IMR-90 (cell line): ENCODE measurements at regions of chr5 and their contacts with region 1.

Region 1: GRCh38 chr5:41445932-41446563 is 64.4 kb downstream of the PLCXD3 start:
- DNase-seq: peak; percentile 40
- ATAC-seq: no peak
- H3K4me3 ChIP-seq: no peak overlapping the region
- H3K27ac ChIP-seq: no peak overlapping the region
- H3K4me1 ChIP-seq: no peaks in the 10 kb centered on the region
- H3K27me3 ChIP-seq: peaks cover 2% of the 10 kb centered on the region
- CTCF ChIP-seq: no peak
- POLR2A ChIP-seq: no peak
- RAD21 ChIP-seq: no peak

Region 2: DNA sequence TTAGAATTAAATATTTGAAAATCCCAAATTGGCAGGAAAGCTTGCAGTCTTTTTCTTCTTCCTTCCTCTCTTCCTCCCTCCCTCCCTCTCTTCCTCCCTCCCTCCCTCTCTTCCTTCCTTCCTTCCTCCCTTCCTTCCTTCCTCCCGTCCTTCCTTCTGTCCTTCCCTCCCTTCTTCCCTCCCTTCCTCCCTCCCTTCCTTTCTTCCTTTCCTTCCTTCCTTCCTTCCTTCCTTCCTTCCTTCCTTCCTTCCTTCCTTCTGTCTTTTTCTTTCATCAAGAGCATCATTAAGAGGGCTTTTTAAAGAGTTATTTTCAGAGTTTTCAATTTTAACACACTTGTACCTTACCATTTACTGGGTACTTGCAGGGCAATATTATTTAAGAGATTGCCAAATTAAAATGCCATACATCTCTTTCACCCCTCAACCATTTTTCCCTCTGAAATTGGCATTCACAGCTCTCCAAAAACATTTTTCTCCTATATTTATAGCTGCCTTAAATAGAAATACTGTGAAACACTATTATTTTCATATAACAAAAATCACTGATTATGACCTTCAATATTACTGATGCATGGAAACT is 133.5 kb before region 1 on chr5:
- CTCF ChIA-PET with region 1: no interaction called
- POLR2A ChIA-PET with region 1: no interaction called
- dilution Hi-C with region 1: no loop called
- in situ Hi-C with region 1: no loop called
- intact Hi-C with region 1: no loop called
- DNase-seq: no peak
- ATAC-seq: no peak
- H3K4me3 ChIP-seq: no peak overlapping the region
- H3K27ac ChIP-seq: no peak overlapping the region
- H3K4me1 ChIP-seq: no peaks in the 10 kb centered on the region
- H3K27me3 ChIP-seq: no peaks in the 10 kb centered on the region; the same call in 1 of the 2 replicates
- CTCF ChIP-seq: no peak
- POLR2A ChIP-seq: no peak
- RAD21 ChIP-seq: no peak

Region 3: DNA sequence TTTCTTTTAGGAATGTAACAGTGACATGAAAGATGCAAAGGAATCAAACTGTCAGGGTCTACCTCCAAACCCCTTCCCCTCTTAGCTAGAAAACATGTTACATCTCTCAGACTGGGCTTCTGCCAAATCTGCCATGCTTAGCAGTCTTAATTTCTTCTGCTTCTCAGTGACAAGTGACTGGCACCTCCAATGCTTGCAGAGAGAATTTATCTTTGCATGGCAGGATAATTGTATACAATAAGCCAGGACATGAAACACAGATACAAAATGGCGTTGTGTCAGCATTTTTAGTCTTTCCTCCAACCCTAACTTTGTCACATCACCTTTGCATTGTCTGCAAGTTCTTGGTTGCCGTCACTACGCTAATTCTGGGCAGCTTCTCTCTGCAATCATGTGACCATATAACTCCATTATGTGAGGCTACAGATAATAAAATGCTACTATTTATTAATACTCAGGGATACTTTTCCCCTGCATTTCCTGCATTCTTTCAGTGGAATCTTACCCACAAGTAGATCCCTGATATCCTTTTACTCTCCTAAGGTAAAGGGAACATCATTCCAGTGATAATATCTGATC is 25.5 kb before region 1 on chr5:
- CTCF ChIA-PET with region 1: no interaction called
- POLR2A ChIA-PET with region 1: no interaction called
- dilution Hi-C with region 1: no loop called
- in situ Hi-C with region 1: no loop called
- intact Hi-C with region 1: loop called (anchors 2 kb)
- DNase-seq: no peak
- ATAC-seq: no peak
- H3K4me3 ChIP-seq: no peak overlapping the region
- H3K27ac ChIP-seq: no peak overlapping the region
- H3K4me1 ChIP-seq: peaks cover 2% of the 10 kb centered on the region
- H3K27me3 ChIP-seq: no peaks in the 10 kb centered on the region
- CTCF ChIP-seq: no peak
- POLR2A ChIP-seq: no peak
- RAD21 ChIP-seq: no peak